Upper lobe of right lung (tissue), 1 donor: ENCODE measurements at regions of chr17 and their contacts with region 1.

Region 1: GRCh38 chr17:46212634-46213435 is 19.6 kb upstream of the KANSL1 start:
- DNase-seq: no peak
- ATAC-seq: peak; percentile 83
- H3K4me3 ChIP-seq: no peak overlapping the region
- H3K27ac ChIP-seq: no peak overlapping the region
- H3K4me1 ChIP-seq: no peaks in the 10 kb centered on the region
- H3K27me3 ChIP-seq: no peaks in the 10 kb centered on the region
- CTCF ChIP-seq: peak; percentile 76

Region 2: DNA sequence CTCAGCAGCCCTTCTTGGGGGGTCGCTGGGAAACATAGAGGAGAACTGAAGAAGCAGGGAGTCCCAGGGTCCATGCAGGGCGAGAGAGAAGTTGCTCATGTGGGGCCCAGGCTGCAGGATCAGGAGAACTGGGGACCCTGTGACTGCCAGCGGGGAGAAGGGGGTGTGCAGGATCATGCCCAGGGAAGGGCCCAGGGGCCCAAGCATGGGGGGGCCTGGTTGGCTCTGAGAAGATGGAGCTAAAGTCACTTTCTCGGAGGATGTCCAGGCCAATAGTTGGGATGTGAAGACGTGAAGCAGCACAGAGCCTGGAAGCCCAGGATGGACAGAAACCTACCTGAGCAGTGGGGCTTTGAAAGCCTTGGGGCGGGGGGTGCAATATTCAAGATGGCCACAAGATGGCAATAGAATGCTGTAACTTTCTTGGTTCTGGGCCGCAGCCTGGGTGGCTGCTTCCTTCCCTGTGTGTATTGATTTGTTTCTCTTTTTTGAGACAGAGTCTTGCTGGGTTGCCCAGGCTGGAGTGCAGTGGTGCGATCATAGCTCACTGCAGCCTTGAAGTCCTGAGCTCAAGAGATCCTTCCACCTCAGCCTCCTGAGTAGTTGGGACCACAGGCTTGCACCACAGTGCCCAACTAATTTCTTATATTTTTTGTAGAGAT is 210.4 kb before region 1 on chr17:
- intact Hi-C with region 1: loop called (anchors 5 kb)
- DNase-seq: peak; percentile 76
- ATAC-seq: peak; percentile 93
- H3K4me3 ChIP-seq: no peak overlapping the region
- H3K27ac ChIP-seq: no peak overlapping the region
- H3K4me1 ChIP-seq: no peaks in the 10 kb centered on the region
- H3K27me3 ChIP-seq: no peaks in the 10 kb centered on the region
- CTCF ChIP-seq: peak; percentile 99